ENCODE measurements at regions of chr17 and their contacts with region 1.

Region 1: DNA sequence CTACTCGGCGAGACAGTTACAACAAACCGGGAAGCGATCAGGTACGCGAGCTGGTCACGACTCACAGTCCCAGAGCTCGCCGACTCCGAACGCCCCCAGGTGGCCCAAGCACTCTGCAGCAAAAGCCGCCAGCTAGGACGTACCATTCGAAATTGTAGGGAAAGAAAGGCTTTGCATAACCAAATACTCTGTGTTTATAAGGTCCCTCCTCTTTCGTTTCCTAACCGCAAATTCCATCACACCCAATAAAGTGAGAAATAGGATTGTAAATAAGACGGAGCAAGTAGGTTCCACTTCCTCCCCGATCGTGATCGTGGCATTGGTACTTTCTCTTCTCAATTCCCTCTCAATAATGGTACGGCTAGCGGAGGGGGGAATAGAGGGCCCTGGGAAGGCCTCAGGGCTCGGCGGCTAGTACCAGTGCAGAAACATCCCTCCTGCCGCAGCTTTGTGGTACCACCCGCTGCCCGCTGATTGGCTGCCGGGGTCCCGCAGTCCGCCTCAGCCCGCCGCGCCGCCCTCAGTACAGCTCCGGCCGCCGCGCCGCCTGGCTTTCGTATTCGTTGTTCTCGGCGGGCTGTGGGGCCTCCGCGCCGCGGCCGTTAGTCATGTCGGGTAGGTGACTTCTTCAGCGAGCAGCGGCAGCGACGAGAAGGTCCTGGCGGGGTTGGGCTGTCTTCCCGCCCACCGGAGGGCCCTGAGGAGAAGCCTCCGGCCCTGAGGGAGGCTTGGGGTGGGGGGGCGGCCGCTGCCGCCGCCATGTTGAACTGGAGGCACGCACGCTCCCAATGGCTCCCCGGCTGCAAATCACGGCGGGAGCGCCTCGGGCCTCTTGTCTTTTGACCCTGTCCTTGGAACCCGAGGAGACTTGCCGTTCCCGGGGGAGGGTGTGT is at the start of gene TAF15:
- DNase-seq: peak; percentile 98
- H3K4me3 Mint-ChIP-seq: peak within 1 kb of the TSS; percentile 89
- H3K27ac Mint-ChIP-seq: peak within 1 kb of the TSS; percentile 99
- H3K4me1 Mint-ChIP-seq: peaks cover 64% of the 10 kb centered on the region
- H3K27me3 Mint-ChIP-seq: no peaks in the 10 kb centered on the region

Region 2: GRCh38 chr17:35757243-35757642 is 52.0 kb before region 1 on chr17:
- CTCF ChIA-PET with region 1: interaction called, 219 read pairs
- DNase-seq: no peak
- H3K4me3 Mint-ChIP-seq: no peak overlapping the region
- H3K27ac Mint-ChIP-seq: no peak overlapping the region
- H3K4me1 Mint-ChIP-seq: no peaks in the 10 kb centered on the region
- H3K27me3 Mint-ChIP-seq: peaks cover 37% of the 10 kb centered on the region